PC-3 (cell line): ENCODE measurements at regions of chr3 and their contacts with region 1.

Region 1: GRCh38 chr3:149657926-149658733 is at the start of gene WWTR1:
- DNase-seq: peak; percentile 97
- ATAC-seq: peak; percentile 68
- H3K4me3 ChIP-seq: peak within 1 kb of the TSS; percentile 98
- H3K27ac ChIP-seq: peak within 1 kb of the TSS; percentile 95
- H3K4me1 ChIP-seq: peaks cover 39% of the 10 kb centered on the region
- H3K27me3 ChIP-seq: no peaks in the 10 kb centered on the region
- CTCF ChIP-seq: 0 out of 2 replicates have a peak, but pooled peaks have one; percentile 27
- total RNA-seq, gene WWTR1: 74.4 and 79.7 TPM in 2 replicates

Region 2: DNA sequence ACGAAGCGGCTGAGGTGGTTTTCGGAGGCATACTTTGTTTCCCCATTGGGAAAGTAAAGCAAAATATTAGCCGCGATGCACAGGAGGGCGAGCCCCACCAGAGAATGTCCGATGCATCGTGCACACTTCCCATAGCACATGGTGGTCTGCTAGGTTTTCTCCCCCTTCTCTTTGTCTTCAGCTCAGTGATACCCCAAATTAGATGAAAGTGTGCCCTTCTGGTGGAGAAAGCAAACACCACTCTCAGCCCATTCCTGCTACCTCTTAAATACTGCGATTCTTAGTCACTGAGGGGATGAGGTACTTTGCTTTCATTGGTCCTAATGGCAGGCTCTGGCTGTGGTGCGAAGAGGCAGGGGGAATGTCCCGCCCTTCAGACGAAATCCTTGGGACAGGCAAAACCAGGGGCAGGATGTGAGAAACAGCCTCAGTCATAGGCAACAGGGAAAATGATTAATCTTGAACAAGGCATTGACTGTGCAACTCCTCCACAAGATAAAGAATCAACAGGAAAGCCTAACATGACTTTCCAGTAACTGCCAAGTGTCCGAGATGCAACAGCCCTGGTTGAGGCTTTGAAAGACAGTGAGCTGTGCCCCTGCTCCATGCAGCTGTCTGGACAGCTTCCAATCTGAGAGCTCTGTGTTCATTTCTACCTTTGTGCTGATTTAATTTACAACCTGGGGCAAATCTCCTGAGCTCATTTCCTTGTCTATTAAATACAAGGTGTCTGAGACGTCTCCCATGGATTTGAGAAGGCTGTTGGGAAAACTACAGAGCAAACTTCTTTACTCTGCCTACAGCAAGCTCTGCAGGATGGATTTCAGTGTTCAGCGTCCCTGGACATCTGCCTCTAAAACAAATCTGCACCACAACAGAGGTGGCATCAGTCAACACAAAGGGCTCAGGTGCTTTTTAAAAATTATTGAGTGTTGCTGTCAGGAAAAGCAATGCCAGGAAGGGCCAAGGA is 280.4 kb before region 1 on chr3 and contains the start of gene TM4SF1:
- CTCF ChIA-PET with region 1: no interaction called
- POLR2A ChIA-PET with region 1: interaction called, 7 read pairs
- intact Hi-C with region 1: loop called (anchors 10 kb)
- DNase-seq: peak; percentile 98
- ATAC-seq: peak; percentile 80
- H3K4me3 ChIP-seq: peak within 1 kb of the TSS; percentile 90
- H3K27ac ChIP-seq: peak within 1 kb of the TSS; percentile 99
- H3K4me1 ChIP-seq: peaks cover 63% of the 10 kb centered on the region
- H3K27me3 ChIP-seq: no peaks in the 10 kb centered on the region
- CTCF ChIP-seq: no peak
- total RNA-seq, gene TM4SF1: 408 and 535 TPM in 2 replicates

Region 3: GRCh38 chr3:149547938-149548668 is 110.0 kb before region 1 on chr3:
- CTCF ChIA-PET with region 1: no interaction called
- POLR2A ChIA-PET with region 1: interaction called, 11 read pairs
- intact Hi-C with region 1: no loop called
- DNase-seq: peak; percentile 72
- ATAC-seq: peak; percentile 70
- H3K4me3 ChIP-seq: peak overlapping the region; percentile 3; the same call in 1 of the 2 replicates
- H3K27ac ChIP-seq: peak overlapping the region; percentile 88
- H3K4me1 ChIP-seq: peaks cover 22% of the 10 kb centered on the region
- H3K27me3 ChIP-seq: no peaks in the 10 kb centered on the region
- CTCF ChIP-seq: no peak

Region 4: DNA sequence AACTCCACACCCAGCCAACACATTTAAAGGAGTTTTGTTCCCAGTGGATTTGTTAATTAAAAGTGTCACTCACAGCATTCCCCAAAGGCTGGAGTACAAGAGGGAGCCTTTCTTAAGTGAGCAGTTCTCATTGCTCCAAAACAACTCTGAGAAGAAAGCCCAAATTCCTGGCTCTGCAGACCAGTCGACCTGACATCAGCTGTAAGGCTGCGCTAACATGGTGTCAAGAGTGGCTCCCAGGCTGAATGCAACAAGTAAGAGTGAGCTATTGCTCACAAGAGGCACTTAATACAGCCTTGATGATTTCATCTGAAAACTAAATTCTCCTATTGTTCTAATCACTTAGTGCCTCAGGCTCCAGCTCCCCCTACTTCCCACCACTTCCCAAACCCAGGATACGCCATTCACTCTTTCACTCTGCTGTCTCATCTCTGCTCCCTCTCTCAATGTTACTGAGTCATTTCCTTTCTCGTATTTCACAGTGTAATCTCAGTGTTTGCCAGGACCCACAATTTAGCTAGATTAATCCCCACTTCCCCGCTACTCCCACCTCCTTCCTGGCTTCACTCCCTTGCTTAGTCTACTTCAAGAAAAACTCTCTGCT is 82.1 kb before region 1 on chr3:
- CTCF ChIA-PET with region 1: interaction called, 8 read pairs
- POLR2A ChIA-PET with region 1: interaction called, 36 read pairs
- intact Hi-C with region 1: loop called (anchors 1 kb)
- DNase-seq: peak; percentile 98
- ATAC-seq: peak; percentile 62
- H3K4me3 ChIP-seq: peak overlapping the region; percentile 55
- H3K27ac ChIP-seq: peak overlapping the region; percentile 99
- H3K4me1 ChIP-seq: peaks cover 92% of the 10 kb centered on the region
- H3K27me3 ChIP-seq: no peaks in the 10 kb centered on the region
- CTCF ChIP-seq: no peak

Region 5: DNA sequence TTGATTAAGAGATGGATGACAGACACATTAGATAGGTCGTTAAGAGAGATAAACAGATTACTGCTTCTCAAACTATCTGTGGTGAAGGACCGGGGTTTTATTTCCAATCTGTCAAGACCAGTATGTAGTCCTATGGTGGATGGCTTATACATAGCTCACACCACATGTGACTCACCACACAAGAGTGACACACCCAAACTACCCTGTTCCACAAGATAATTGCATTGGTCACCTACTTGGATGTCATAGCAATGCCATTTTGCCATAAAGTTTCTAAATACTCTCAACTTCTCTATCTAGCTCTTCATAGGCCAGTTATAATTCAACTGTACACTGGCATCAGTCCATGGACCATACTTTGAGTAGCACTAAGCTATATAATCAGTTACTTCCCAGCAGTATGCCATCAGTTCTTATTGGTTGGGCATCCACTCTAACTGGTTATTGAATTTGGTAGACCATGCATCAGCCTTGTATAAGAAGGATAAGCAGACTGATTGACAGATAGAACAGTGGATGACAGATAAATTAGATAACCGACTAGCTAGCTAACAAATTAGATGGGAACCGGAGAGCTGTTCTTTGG is 11.9 kb before region 1 on chr3:
- CTCF ChIA-PET with region 1: interaction called, 3 read pairs
- POLR2A ChIA-PET with region 1: interaction called, 10 read pairs
- intact Hi-C with region 1: no loop called
- DNase-seq: peak; percentile 89
- ATAC-seq: peak; percentile 88
- H3K4me3 ChIP-seq: no peak overlapping the region
- H3K27ac ChIP-seq: peak overlapping the region; percentile 31
- H3K4me1 ChIP-seq: peaks cover 17% of the 10 kb centered on the region
- H3K27me3 ChIP-seq: no peaks in the 10 kb centered on the region
- CTCF ChIP-seq: no peak

Region 6: GRCh38 chr3:149702691-149703441 is 44.7 kb after region 1 on chr3:
- CTCF ChIA-PET with region 1: no interaction called
- POLR2A ChIA-PET with region 1: interaction called, 3 read pairs
- intact Hi-C with region 1: loop called (anchors 5 kb)
- DNase-seq: peak; percentile 64
- ATAC-seq: peak; percentile 85
- H3K4me3 ChIP-seq: no peak overlapping the region
- H3K27ac ChIP-seq: peak overlapping the region; percentile 71
- H3K4me1 ChIP-seq: peaks cover 10% of the 10 kb centered on the region
- H3K27me3 ChIP-seq: no peaks in the 10 kb centered on the region
- CTCF ChIP-seq: no peak

Region 7: GRCh38 chr3:149812606-149813366 is 154.7 kb after region 1 on chr3 and contains the start of gene RNF13:
- CTCF ChIA-PET with region 1: no interaction called
- POLR2A ChIA-PET with region 1: no interaction called
- intact Hi-C with region 1: loop called (anchors 5 kb)
- DNase-seq: peak; percentile 94
- ATAC-seq: peak; percentile 87
- H3K4me3 ChIP-seq: peak within 1 kb of the TSS; percentile 89
- H3K27ac ChIP-seq: peak within 1 kb of the TSS; percentile 91
- H3K4me1 ChIP-seq: peaks cover 40% of the 10 kb centered on the region
- H3K27me3 ChIP-seq: no peaks in the 10 kb centered on the region
- CTCF ChIP-seq: no peak
- total RNA-seq, gene RNF13: 33.8 and 43.1 TPM in 2 replicates

Region 8: GRCh38 chr3:149947231-149947630 is 289.1 kb after region 1 on chr3:
- CTCF ChIA-PET with region 1: no interaction called
- POLR2A ChIA-PET with region 1: no interaction called
- intact Hi-C with region 1: no loop called
- DNase-seq: no peak
- ATAC-seq: no peak
- H3K4me3 ChIP-seq: no peak overlapping the region
- H3K27ac ChIP-seq: no peak overlapping the region
- H3K4me1 ChIP-seq: no peaks in the 10 kb centered on the region
- H3K27me3 ChIP-seq: no peaks in the 10 kb centered on the region
- CTCF ChIP-seq: no peak